KBM-7 (cell line): ENCODE measurements at regions of chr5 and their contacts with region 1.

Region 1: DNA sequence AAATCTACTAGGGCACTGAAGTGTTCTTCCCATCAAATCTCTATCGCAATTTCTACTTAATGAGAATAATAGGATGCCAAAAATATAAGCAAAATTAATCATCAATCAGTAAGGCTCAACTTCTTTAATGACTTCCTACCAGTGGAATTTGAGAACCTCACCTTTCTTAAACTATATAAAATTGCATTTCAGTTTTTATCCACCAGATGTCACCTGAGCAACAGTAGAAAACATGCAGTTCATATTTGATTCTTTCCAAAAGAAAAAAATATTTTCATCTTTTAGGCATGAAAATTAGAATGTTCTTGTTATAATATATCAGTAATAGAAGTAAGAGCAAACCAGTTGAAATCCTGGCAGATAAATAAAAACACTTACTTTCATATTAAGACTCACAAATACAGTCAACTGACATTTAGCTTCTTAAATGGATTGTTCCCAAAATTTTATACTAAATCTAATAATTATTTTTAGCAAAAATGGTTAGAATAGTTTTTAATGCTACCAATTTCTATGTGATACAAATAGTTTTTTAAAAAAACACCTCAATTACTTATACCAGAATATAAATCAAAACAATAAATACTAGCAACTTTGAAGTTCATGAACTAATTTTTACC is 13.4 kb upstream of the CCDC112 start:
- DNase-seq: peak; percentile 70

Region 2: DNA sequence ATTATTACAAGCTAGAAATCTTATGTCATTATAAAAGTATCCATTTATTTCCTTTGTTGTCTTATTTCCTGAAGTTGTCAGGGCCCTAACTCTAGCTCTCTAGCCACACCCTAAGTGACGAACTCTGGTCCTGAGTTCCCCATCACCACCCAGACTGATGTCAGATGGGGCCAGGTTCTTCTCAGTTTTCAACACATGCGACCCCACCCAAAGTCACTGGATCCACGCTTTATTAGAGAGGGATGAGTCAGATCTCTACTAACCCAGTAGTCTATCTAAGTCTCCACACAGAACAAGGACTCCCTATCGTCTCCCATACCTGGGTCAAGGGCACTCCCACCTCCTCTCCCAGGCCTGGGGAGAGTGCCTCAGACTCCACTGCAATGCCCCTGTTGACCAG is 241.6 kb after region 1 on chr5:
- in situ Hi-C with region 1: loop called (anchors 25 kb)
- DNase-seq: no peak

Region 3: DNA sequence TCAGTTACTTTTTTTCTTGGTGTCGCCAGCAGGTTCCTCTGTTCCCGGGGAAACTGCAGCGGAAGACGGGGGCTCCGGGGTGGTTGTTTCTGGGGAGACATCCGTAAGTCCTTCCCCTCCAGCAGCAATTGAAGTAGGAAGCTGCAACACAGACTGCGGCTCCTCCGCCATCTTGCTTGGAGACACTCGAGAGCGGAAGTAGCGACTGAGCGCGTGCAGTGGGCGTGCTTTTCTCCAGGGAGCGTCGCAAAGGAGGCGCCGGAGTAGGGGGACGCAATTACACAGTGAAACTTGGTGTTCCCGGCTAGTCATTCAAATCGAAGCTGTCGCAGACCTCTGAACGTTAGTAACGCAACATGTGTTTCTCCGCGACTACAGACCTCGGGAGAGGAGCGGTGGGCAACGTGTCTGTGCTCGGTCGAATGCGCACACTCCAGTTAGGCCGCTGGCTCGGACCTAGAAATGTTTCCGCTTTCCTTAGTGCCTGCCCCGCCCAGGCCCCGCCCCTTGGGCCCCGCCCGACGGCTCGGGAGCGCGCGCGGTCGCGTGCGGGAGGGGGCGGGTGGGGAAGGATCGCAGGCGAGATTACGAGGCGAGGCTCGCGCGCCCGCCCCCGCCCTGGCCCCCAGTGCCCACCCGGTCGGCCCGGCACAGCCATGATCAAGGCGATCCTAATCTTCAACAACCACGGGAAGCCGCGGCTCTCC is 531.7 kb after region 1 on chr5 and contains the starts of genes AP3S1 and ATG12:
- in situ Hi-C with region 1: loop called (anchors 25 kb)
- DNase-seq: peak; percentile 96